IMR-90 (cell line): ENCODE measurements at regions of chr1 and their contacts with region 1.

Region 1: DNA sequence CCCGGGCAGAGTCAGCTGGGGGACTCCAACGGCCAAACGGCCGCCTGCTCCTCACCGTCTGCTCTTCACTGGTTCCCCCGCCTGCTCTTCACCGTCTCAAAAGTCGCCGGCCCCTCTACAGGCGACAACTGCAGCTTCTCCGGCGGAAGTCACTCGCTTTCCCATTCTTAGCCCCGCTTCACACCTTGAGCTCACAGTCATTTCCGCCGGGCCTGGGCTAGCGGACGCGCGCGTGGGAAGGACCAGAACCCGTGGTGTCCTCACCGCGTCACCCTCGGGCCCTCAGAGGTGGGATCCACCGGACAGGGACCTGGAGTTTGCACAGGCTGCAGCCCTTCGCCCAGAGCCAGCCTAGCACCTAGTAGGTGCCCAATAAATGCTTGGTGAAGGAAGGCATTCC is 27.9 kb upstream of the HJV start:
- DNase-seq: no peak
- ATAC-seq: no peak
- H3K4me3 ChIP-seq: no peak overlapping the region
- H3K27ac ChIP-seq: no peak overlapping the region
- H3K4me1 ChIP-seq: no peaks in the 10 kb centered on the region
- H3K27me3 ChIP-seq: no peaks in the 10 kb centered on the region
- CTCF ChIP-seq: no peak
- POLR2A ChIP-seq: no peak
- RAD21 ChIP-seq: no peak

Region 2: DNA sequence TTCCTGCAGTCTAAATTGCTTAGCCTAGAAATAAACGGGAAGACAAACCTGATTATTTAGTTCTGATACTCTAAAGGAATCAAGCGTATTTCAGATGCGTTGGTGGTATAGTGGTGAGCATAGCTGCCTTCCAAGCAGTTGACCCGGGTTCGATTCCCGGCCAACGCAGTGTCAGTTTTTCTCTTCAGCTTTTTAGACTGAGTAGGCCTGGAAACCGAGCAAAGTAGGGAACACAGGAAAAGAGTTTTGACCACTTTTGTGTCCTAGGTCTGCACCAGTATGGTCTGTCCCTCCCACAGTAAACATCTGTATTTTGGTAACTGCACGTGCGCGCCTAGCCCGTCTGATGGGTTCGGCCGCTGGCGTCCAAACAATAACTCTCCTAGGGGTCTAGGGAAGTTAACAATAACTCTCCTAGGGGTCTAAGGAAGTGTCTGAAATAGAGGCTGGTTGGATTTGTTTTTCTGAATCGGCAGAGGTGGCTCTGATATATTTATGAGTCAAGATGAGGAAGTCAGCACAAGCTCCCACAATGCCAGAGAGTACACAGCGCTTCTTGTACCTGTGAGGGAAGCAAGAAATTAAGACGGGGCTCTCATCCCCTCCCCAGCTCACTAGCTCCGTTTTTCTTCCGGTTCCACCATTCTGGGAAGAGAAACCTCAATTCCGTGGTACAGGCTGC is 12.3 kb before region 1 on chr1:
- CTCF ChIA-PET with region 1: interaction called, 4 read pairs
- POLR2A ChIA-PET with region 1: interaction called, 10 read pairs
- dilution Hi-C with region 1: no loop called
- in situ Hi-C with region 1: no loop called
- intact Hi-C with region 1: no loop called
- DNase-seq: peak; percentile 87
- ATAC-seq: peak; percentile 49
- H3K4me3 ChIP-seq: peak overlapping the region; percentile 69
- H3K27ac ChIP-seq: peak overlapping the region; percentile 29
- H3K4me1 ChIP-seq: no peaks in the 10 kb centered on the region
- H3K27me3 ChIP-seq: no peaks in the 10 kb centered on the region
- CTCF ChIP-seq: no peak
- POLR2A ChIP-seq: no peak
- RAD21 ChIP-seq: no peak